ENCODE measurements at regions of chr3 and their contacts with region 1.

Region 1: GRCh38 chr3:58299839-58300516 is 6.1 kb upstream of the RPP14 start:
- DNase-seq: no peak
- ATAC-seq: no peak
- H3K4me3 ChIP-seq: no peak overlapping the region
- H3K27ac ChIP-seq: no peak overlapping the region
- H3K4me1 ChIP-seq: no peaks in the 10 kb centered on the region
- H3K27me3 ChIP-seq: no peaks in the 10 kb centered on the region

Region 2: DNA sequence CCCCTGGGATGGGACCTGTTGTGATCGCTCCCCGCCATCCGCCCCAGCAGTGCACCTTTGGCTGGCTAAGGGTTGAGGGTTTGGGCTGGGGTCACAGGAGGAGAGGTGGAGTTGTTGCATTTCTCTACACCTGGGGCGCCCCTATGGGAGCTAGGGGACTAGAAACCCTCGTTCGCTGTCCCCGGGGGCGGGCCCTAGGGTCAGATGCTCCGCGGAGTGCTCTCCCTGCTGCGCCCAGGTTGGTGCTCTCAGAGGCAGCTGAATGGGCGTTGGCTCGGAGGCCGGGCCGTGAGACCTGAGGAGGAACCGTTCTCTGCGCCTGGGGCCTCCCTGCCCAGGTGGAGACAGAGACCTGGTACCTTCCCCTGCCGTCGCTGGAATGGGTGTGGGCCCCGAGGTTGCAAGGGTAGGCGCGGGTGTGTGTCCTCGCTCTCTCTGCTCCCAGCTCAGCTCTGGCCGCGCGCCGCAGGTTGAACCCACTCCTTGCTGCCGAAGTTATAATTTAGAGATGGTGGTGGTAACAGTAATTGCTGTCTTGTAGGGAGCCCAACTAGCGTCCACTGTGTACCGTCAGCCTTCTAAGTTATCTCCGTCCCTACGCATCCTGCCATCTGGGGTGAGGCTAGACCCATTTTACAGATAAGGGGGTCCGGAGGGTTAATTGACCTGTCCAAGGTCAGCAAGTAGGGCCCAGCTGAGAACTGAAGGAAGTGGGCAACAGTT is 290.8 kb before region 1 on chr3:
- intact Hi-C with region 1: no loop called
- DNase-seq: peak; percentile 38 to 73 (median 69)
- ATAC-seq: peak; percentile 15 to 20
- H3K4me3 ChIP-seq: peak overlapping the region; percentile 91
- H3K27ac ChIP-seq: peak overlapping the region; percentile 86
- H3K4me1 ChIP-seq: peaks cover 9% of the 10 kb centered on the region
- H3K27me3 ChIP-seq: no peaks in the 10 kb centered on the region

Region 3: DNA sequence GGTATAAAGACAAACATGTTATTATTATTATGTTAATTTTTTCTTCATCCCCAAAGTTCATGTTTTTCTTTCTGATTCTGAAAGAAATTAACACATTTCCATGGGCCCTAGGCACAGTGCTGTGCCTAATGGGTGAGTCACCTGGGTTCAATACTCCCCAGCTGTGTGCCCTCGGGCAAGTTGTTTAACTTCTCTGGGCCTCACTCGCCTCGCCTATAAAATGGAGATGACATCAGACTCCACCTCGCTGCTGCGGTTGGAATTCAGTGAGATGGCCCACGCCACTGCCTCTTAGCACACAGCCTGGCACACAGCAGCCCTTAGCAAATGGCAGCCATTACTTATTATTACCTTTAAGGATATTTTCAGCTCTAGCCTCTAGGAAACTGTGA is 111.8 kb before region 1 on chr3:
- intact Hi-C with region 1: loop called (anchors 2 to 5 kb)
- DNase-seq: no peak
- ATAC-seq: peak in 1 of 2 donors; percentile 9
- H3K4me3 ChIP-seq: no peak overlapping the region
- H3K27ac ChIP-seq: no peak overlapping the region
- H3K4me1 ChIP-seq: peaks cover 8% of the 10 kb centered on the region
- H3K27me3 ChIP-seq: no peaks in the 10 kb centered on the region

Region 4: GRCh38 chr3:58237238-58237940 is 62.6 kb before region 1 on chr3 and contains the start of gene ABHD6:
- intact Hi-C with region 1: loop called in 2 of 4 experiments (anchors 5 kb)
- DNase-seq: peak; percentile 68 to 93 (median 91)
- ATAC-seq: peak; percentile 95 to 96
- H3K4me3 ChIP-seq: peak within 1 kb of the TSS; percentile 79
- H3K27ac ChIP-seq: peak within 1 kb of the TSS; percentile 81
- H3K4me1 ChIP-seq: no peaks in the 10 kb centered on the region
- H3K27me3 ChIP-seq: no peaks in the 10 kb centered on the region
- total RNA-seq, gene ABHD6: 6.1 to 13.4 (median 10.8) TPM

Measured in right cardiac atrium (tissue), 5 donors.